ENCODE measurements at regions of chr1 and their contacts with region 1.

Region 1: GRCh38 chr1:153727463-153728304 is at the start of gene INTS3:
- DNase-seq: peak; percentile 99
- H3K4me3 Mint-ChIP-seq: peak within 1 kb of the TSS; percentile 90
- H3K27ac Mint-ChIP-seq: peak within 1 kb of the TSS; percentile 91
- H3K4me1 Mint-ChIP-seq: peaks cover 35% of the 10 kb centered on the region
- H3K27me3 Mint-ChIP-seq: no peaks in the 10 kb centered on the region
- total RNA-seq, gene INTS3: 57.0 and 57.3 TPM in 2 replicates

Region 2: DNA sequence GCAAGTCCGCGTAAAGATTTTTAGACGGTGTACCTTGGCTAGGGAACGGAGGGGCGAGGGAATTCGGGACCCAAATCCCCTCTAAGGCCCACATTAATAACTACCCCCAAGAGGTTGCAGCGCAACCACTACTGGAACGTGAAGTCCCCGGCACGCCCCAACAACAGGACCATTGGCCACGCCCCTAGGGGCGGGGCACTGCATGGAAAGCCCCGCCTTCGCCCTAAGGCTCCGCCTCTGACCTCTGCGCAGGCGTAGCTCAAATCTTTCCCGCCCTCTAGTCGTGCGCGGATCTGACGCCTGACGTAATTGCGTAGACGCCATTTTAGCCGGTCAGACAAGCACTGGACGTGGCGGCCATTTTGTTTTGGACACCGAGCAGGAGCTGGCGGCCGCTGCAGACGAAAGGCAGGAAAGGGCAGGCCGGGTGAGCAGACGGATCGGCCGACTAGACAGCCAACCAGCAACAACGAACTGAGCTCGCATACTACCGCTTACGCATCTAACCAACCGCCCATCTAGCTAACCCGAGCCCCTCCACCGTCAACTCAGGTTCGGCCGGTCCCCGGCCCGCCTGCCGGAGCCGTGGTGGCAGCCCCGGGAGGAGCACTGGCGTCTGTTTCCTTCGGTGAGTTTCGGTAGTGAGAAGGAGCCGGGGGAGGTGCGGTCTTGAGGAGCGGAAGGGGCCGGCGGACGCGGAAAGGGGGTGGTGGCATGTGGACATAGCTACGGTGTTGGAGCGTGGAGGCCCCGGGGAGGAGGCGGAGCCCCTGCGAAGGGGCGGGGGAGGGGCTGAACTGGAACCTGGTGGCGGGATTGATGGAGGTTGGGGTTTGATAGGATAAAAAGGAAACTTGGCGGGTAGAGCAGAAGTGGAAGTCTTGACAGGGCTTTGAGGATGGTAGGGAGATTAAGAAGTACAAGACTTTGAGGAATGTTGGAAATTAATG is 93.7 kb before region 1 on chr1 and contains the start of gene CHTOP:
- intact Hi-C with region 1: loop called (anchors 1 kb)
- DNase-seq: peak; percentile 96
- H3K4me3 Mint-ChIP-seq: peak within 1 kb of the TSS; percentile 97
- H3K27ac Mint-ChIP-seq: peak within 1 kb of the TSS; percentile 100
- H3K4me1 Mint-ChIP-seq: peaks cover 45% of the 10 kb centered on the region
- H3K27me3 Mint-ChIP-seq: no peaks in the 10 kb centered on the region
- total RNA-seq, gene CHTOP: 101 and 105 TPM in 2 replicates

Region 3: GRCh38 chr1:153749408-153750005 is 21.8 kb after region 1 on chr1:
- intact Hi-C with region 1: loop called (anchors 2 kb)
- DNase-seq: peak; percentile 75
- H3K4me3 Mint-ChIP-seq: no peak overlapping the region
- H3K27ac Mint-ChIP-seq: no peak overlapping the region
- H3K4me1 Mint-ChIP-seq: peaks cover 7% of the 10 kb centered on the region
- H3K27me3 Mint-ChIP-seq: no peaks in the 10 kb centered on the region

Region 4: GRCh38 chr1:153958111-153958960 is 230.7 kb after region 1 on chr1 and contains the start of gene CRTC2:
- intact Hi-C with region 1: loop called (anchors 5 kb)
- DNase-seq: peak; percentile 96
- H3K4me3 Mint-ChIP-seq: peak within 1 kb of the TSS; percentile 97
- H3K27ac Mint-ChIP-seq: peak within 1 kb of the TSS; percentile 81
- H3K4me1 Mint-ChIP-seq: peaks cover 65% of the 10 kb centered on the region
- H3K27me3 Mint-ChIP-seq: no peaks in the 10 kb centered on the region
- total RNA-seq, gene CRTC2: 62.8 and 76.4 TPM in 2 replicates

Measured in activated T-helper 1 cell treated with anti-CD3 and anti-CD28 coated beads, Interleukin-12 subunit alpha, Interleukin-12 subunit beta, Interleukin-2, Interleukin-4 antibody, amounts not matched to agents 30 ng/mL and 10 ng/mL and 1 ng/mL, durations not matched to agents 14 hours and 24 hours and 36 hours (primary cell).